ENCODE measurements at regions of chr9 and their contacts with region 1.

Region 1: GRCh38 chr9:77841739-77842386 is 189.7 kb downstream of the GNAQ start:
- DNase-seq: no peak
- ATAC-seq: no peak

Region 2: DNA sequence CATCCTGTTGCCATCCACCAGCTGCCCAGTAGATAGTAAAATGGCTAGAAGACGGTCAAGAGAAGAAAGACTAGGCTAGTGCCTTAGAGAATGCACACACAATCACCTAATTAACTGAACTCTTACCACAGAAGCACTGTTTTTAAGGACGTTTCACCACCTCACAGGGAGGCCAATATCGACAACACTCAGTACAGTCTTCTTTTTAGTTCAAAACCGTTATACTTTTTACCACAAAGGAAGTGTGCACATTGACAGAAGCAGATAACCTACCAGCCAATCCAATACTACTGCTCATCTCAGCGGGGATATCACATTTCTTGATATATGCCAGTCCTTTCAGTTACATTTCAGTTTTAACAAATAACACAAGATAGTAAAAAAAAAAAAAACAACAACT is 67.4 kb after region 1 on chr9:
- intact Hi-C with region 1: no loop called
- DNase-seq: no peak
- ATAC-seq: no peak

Region 3: DNA sequence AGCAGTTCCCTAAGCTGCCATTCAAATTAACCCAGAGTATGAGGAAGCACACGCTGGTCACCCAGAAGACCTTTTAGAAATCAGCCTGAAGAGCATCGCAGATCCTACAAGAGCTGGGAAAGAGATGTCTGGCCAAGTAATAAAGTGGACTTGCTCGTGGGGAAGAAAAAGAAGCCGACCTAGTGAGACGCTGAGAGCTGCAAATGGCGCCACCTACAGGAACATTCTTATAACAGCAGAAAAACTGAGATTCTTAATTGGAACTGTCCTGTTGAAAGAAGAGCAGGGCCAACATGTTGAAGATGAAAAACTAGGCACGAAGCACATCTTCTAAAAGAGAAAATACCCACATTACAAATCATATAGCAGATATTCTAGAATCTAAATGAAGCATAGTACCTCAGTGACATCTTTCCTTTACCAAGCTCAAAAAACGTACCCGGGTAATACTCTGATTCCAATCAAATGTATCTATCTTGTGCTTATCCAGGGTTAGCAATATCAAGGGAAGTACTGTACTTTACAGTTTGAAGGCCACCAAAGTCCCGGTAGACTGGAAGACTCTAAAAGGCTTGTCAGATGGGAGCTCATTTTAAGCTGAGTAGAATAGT is 193.6 kb after region 1 on chr9:
- intact Hi-C with region 1: loop called (anchors 10 kb)
- DNase-seq: peak; percentile 30
- ATAC-seq: peak; percentile 9

Measured in left ventricle myocardium superior (tissue), 1 donor.